PC-3 (cell line): ENCODE measurements at regions of chr6 and their contacts with region 1.

Region 1: GRCh38 chr6:18216411-18216810 is 47.9 kb downstream of the DEK start:
- DNase-seq: peak; percentile 73
- ATAC-seq: peak; percentile 93
- H3K4me3 ChIP-seq: no peak overlapping the region
- H3K27ac ChIP-seq: peak overlapping the region; percentile 13
- H3K4me1 ChIP-seq: peaks cover 15% of the 10 kb centered on the region
- H3K27me3 ChIP-seq: no peaks in the 10 kb centered on the region
- CTCF ChIP-seq: no peak

Region 2: GRCh38 chr6:18139935-18140621 is 76.3 kb before region 1 on chr6:
- CTCF ChIA-PET with region 1: no interaction called
- POLR2A ChIA-PET with region 1: interaction called, 13 read pairs
- intact Hi-C with region 1: no loop called
- DNase-seq: no peak
- ATAC-seq: no peak
- H3K4me3 ChIP-seq: no peak overlapping the region
- H3K27ac ChIP-seq: no peak overlapping the region
- H3K4me1 ChIP-seq: no peaks in the 10 kb centered on the region
- H3K27me3 ChIP-seq: no peaks in the 10 kb centered on the region
- CTCF ChIP-seq: no peak

Region 3: DNA sequence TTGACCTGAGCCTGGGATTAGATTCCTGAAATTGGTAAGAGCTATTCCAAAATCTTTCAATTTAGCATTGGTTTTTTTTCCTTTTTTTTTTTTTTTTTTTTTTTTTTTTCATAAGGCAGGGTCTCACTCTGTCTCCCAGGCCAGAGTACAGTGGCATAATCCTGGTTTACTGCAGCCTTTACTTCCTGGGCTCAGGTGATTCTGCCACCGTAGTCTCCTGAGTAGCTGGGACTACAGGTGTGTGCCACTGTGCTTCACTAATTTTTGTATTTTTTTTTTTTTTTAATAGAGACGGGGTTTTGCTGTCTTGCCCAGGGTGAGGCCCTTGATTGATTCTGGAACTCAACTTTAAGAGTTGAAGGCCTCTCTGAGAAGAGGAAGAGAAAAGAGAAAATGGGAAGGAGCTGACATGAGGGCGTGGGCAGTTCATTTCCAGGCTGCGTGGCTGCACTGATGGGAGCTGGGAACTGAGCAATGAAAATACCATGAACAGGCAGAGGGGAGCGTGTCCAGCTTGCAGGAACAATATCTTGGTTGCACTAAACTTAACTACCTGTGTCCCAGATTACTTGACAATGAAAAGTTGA is 36.5 kb before region 1 on chr6:
- CTCF ChIA-PET with region 1: no interaction called
- POLR2A ChIA-PET with region 1: no interaction called
- intact Hi-C with region 1: loop called (anchors 5 kb)
- DNase-seq: no peak
- ATAC-seq: no peak
- H3K4me3 ChIP-seq: no peak overlapping the region
- H3K27ac ChIP-seq: no peak overlapping the region
- H3K4me1 ChIP-seq: no peaks in the 10 kb centered on the region
- H3K27me3 ChIP-seq: no peaks in the 10 kb centered on the region
- CTCF ChIP-seq: no peak